Mammary epithelial cell (primary cell): ENCODE measurements at regions of chr2 and their contacts with region 1.

Region 1: GRCh38 chr2:143564419-143564818 is 435.2 kb downstream of the ARHGAP15 start:
- DNase-seq: no peak
- H3K4me3 ChIP-seq: no peak overlapping the region
- H3K27ac ChIP-seq: no peak overlapping the region
- H3K4me1 ChIP-seq: no peaks in the 10 kb centered on the region
- H3K27me3 ChIP-seq: no peaks in the 10 kb centered on the region
- CTCF ChIP-seq: no peak

Region 2: GRCh38 chr2:143582046-143582747 is 17.8 kb after region 1 on chr2:
- CTCF ChIA-PET with region 1: interaction called, 10 read pairs
- dilution Hi-C with region 1: no loop called
- in situ Hi-C with region 1: no loop called
- intact Hi-C with region 1: no loop called
- DNase-seq: no peak
- H3K4me3 ChIP-seq: no peak overlapping the region
- H3K27ac ChIP-seq: no peak overlapping the region
- H3K4me1 ChIP-seq: no peaks in the 10 kb centered on the region
- H3K27me3 ChIP-seq: peaks cover 3% of the 10 kb centered on the region
- CTCF ChIP-seq: peak in 1 of 2 donors; percentile 17

Region 3: DNA sequence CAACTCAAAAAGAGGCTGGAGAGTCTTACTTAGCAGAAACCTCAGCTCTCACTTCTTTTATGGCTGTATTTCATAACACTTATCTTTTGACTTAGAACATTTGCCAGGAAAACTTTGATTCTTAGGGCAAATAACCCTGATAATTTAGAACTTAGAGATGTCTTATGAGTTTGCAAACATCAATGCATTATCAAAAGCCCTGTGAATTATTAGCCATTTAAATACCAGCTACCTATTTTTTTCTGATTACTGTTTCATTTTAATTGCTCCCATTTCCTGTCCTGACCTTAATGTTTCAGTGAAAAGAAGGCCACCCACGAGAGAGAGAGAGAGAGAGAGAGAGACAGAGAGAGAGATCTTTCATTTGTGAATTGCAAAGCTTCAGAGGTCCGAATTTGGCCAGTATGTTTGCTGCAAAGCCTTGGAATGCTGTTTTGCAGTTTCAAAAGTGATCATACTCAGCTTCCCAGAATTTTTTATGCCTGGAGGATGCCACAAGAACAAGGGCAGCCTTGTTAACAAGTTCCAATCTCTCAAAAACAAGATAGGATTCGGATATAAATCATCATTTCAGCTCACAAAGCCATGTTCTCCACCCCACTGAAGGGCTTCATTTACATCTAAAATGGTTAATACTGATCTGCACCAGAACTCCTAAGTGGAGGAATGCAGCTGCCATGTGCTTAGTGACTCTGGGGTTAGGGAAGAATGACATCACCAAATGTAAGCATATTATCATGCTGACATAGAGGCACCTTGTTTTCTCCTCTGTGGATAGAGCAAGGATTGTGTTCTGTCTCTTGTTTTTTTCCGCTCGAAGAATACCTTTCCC is 43.0 kb after region 1 on chr2:
- CTCF ChIA-PET with region 1: no interaction called
- dilution Hi-C with region 1: no loop called
- in situ Hi-C with region 1: no loop called
- intact Hi-C with region 1: no loop called
- DNase-seq: no peak
- H3K4me3 ChIP-seq: no peak overlapping the region
- H3K27ac ChIP-seq: no peak overlapping the region
- H3K4me1 ChIP-seq: no peaks in the 10 kb centered on the region
- H3K27me3 ChIP-seq: no peaks in the 10 kb centered on the region
- CTCF ChIP-seq: no peak

Region 4: DNA sequence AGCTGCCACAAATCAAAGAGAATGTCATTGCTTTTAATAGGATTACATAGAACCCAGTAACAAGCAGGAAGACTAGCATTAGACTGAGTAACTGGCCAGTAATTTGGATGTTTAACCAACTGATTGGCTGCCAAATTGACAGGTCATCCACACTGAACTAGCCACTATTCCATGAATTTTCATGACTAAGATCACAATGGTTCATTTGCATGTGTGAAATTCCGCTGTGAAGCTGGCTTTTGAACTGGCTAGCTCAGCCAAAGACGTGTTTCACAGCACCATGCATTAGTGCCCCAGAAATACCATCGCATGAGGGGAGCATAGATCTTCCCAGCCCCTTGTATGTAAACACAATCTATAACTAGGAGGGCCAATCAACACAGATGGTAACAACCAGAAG is 214.6 kb after region 1 on chr2:
- CTCF ChIA-PET with region 1: no interaction called
- dilution Hi-C with region 1: no loop called
- in situ Hi-C with region 1: no loop called
- intact Hi-C with region 1: no loop called
- DNase-seq: peak; percentile 11
- H3K4me3 ChIP-seq: no peak overlapping the region
- H3K27ac ChIP-seq: no peak overlapping the region
- H3K4me1 ChIP-seq: no peaks in the 10 kb centered on the region
- H3K27me3 ChIP-seq: no peaks in the 10 kb centered on the region
- CTCF ChIP-seq: no peak